Mammary epithelial cell (primary cell): ENCODE measurements at regions of chr18 and their contacts with region 1.

Region 1: GRCh38 chr18:31942999-31943865 is at the start of gene TRAPPC8:
- DNase-seq: peak; percentile 97
- H3K4me3 ChIP-seq: peak within 1 kb of the TSS; percentile 83 to 98 (median 94)
- H3K27ac ChIP-seq: peak within 1 kb of the TSS; percentile 82
- H3K4me1 ChIP-seq: peaks cover 11% of the 10 kb centered on the region
- H3K27me3 ChIP-seq: no peaks in the 10 kb centered on the region
- CTCF ChIP-seq: peak in 1 of 2 donors; percentile 31
- total RNA-seq, gene TRAPPC8: 25.0 to 35.8 TPM

Region 2: GRCh38 chr18:30987450-30988241 is 955.6 kb before region 1 on chr18:
- CTCF ChIA-PET with region 1: no interaction called
- dilution Hi-C with region 1: no loop called
- in situ Hi-C with region 1: no loop called
- intact Hi-C with region 1: loop called (anchors 5 kb)
- DNase-seq: peak; percentile 99
- H3K4me3 ChIP-seq: no peak overlapping the region
- H3K27ac ChIP-seq: peak overlapping the region; percentile 97
- H3K4me1 ChIP-seq: peaks cover 22% of the 10 kb centered on the region
- H3K27me3 ChIP-seq: no peaks in the 10 kb centered on the region
- CTCF ChIP-seq: no peak

Region 3: GRCh38 chr18:31876707-31877106 is 66.5 kb before region 1 on chr18:
- CTCF ChIA-PET with region 1: no interaction called
- dilution Hi-C with region 1: no loop called
- in situ Hi-C with region 1: no loop called
- intact Hi-C with region 1: no loop called
- DNase-seq: peak; percentile 55
- H3K4me3 ChIP-seq: no peak overlapping the region
- H3K27ac ChIP-seq: no peak overlapping the region
- H3K4me1 ChIP-seq: peaks cover 7% of the 10 kb centered on the region
- H3K27me3 ChIP-seq: no peaks in the 10 kb centered on the region
- CTCF ChIP-seq: no peak

Region 4: GRCh38 chr18:31970617-31971016 is 27.4 kb after region 1 on chr18:
- CTCF ChIA-PET with region 1: no interaction called
- dilution Hi-C with region 1: no loop called
- in situ Hi-C with region 1: no loop called
- intact Hi-C with region 1: no loop called
- DNase-seq: no peak
- H3K4me3 ChIP-seq: no peak overlapping the region
- H3K27ac ChIP-seq: no peak overlapping the region
- H3K4me1 ChIP-seq: no peaks in the 10 kb centered on the region
- H3K27me3 ChIP-seq: no peaks in the 10 kb centered on the region
- CTCF ChIP-seq: no peak

Region 5: GRCh38 chr18:31990823-31991222 is 47.6 kb after region 1 on chr18:
- CTCF ChIA-PET with region 1: no interaction called
- dilution Hi-C with region 1: no loop called
- in situ Hi-C with region 1: no loop called
- intact Hi-C with region 1: no loop called
- DNase-seq: no peak
- H3K4me3 ChIP-seq: no peak overlapping the region
- H3K27ac ChIP-seq: no peak overlapping the region
- H3K4me1 ChIP-seq: no peaks in the 10 kb centered on the region
- H3K27me3 ChIP-seq: peaks cover 4% of the 10 kb centered on the region
- CTCF ChIP-seq: no peak

Region 6: GRCh38 chr18:32072321-32072720 is 129.1 kb after region 1 on chr18:
- CTCF ChIA-PET with region 1: interaction called, 3 read pairs
- dilution Hi-C with region 1: no loop called
- in situ Hi-C with region 1: no loop called
- intact Hi-C with region 1: loop called (anchors 5 kb)
- DNase-seq: no peak
- H3K4me3 ChIP-seq: no peak overlapping the region
- H3K27ac ChIP-seq: no peak overlapping the region
- H3K4me1 ChIP-seq: no peaks in the 10 kb centered on the region
- H3K27me3 ChIP-seq: no peaks in the 10 kb centered on the region
- CTCF ChIP-seq: peak; percentile 24 to 54

Region 7: DNA sequence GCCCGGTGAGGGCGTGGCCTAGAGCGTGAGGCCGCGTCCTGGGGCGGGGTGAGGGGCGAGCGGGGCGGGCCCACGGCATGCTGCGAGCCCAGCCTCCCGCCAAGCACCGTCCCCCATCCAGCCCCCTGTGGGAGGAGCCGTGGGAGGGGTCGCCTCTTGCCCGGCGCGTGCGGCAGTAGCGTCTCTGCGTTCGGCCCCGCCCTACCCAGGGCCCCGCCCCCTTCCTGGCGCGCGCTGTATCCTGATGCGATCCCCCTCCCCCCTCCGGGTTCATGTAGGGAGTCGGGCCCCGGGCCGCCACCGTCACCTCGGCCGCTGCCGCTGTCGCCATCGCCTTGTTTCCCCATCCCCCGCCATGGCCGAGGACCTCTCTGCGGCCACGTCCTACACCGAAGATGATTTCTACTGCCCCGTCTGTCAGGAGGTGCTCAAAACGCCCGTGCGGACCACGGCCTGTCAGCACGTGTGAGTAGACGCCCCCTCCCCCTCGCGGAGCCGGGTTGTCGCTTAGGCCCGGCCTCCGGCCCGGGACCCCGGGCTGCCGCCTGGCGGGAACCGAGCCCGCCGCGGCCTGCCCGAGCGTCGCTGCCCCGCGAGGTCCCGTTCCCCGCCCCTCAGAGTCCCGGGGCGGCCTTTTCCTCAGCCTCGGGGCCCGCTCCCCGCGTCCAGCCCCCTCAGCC is 149.3 kb after region 1 on chr18:
- CTCF ChIA-PET with region 1: no interaction called
- dilution Hi-C with region 1: no loop called
- in situ Hi-C with region 1: no loop called
- intact Hi-C with region 1: loop called (anchors 5 kb)
- DNase-seq: peak; percentile 96
- H3K4me3 ChIP-seq: peak overlapping the region; percentile 91 to 97 (median 92)
- H3K27ac ChIP-seq: peak overlapping the region; percentile 87
- H3K4me1 ChIP-seq: peaks cover 15% of the 10 kb centered on the region
- H3K27me3 ChIP-seq: no peaks in the 10 kb centered on the region
- CTCF ChIP-seq: no peak